Spleen (tissue), 13 donors: ENCODE measurements at regions of chr1 and their contacts with region 1.

Region 1: GRCh38 chr1:95043141-95043980 is 29.4 kb downstream of the ALG14 start:
- DNase-seq: peak; percentile 91
- H3K4me3 ChIP-seq: no peak overlapping the region
- H3K27ac ChIP-seq: peak overlapping the region in 2 of 8 donors; percentile 9 to 28
- H3K4me1 ChIP-seq: peaks cover 0 to 21% (median 9%) of the 10 kb centered on the region in 6 donors
- H3K27me3 ChIP-seq: no peaks in the 10 kb centered on the region
- CTCF ChIP-seq: peak; percentile 93 to 99 (median 96)
- POLR2A ChIP-seq: no peak

Region 2: GRCh38 chr1:94854458-94855306 is 188.7 kb before region 1 on chr1:
- intact Hi-C with region 1: loop called (anchors 2 kb)
- DNase-seq: peak; percentile 92
- H3K4me3 ChIP-seq: peak overlapping the region in 6 of 8 donors; percentile 27 to 71 (median 35)
- H3K27ac ChIP-seq: peak overlapping the region in 6 of 8 donors; percentile 7 to 76 (median 64)
- H3K4me1 ChIP-seq: peaks cover 0 to 13% (median 5%) of the 10 kb centered on the region in 6 donors
- H3K27me3 ChIP-seq: no peaks in the 10 kb centered on the region
- CTCF ChIP-seq: peak; percentile 84 to 97 (median 92)
- POLR2A ChIP-seq: no peak